RWPE1 (cell line): ENCODE measurements at regions of chr10 and their contacts with region 1.

Region 1: GRCh38 chr10:68110027-68110426 is 739 bp downstream of the MYPN start:
- DNase-seq: no peak
- H3K27ac ChIP-seq: no peak overlapping the region
- CTCF ChIP-seq: no peak

Region 2: GRCh38 chr10:67539312-67539711 is 570.7 kb before region 1 on chr10:
- CTCF ChIA-PET with region 1: no interaction called
- POLR2A ChIA-PET with region 1: interaction called, 10 read pairs
- DNase-seq: no peak
- H3K27ac ChIP-seq: no peak overlapping the region
- CTCF ChIP-seq: no peak

Region 3: GRCh38 chr10:67936416-67936815 is 173.6 kb before region 1 on chr10:
- CTCF ChIA-PET with region 1: no interaction called
- POLR2A ChIA-PET with region 1: no interaction called
- DNase-seq: no peak
- H3K27ac ChIP-seq: no peak overlapping the region
- CTCF ChIP-seq: no peak

Region 4: GRCh38 chr10:68192113-68192512 is 82.1 kb after region 1 on chr10:
- CTCF ChIA-PET with region 1: no interaction called
- POLR2A ChIA-PET with region 1: no interaction called
- DNase-seq: peak; percentile 44
- H3K27ac ChIP-seq: no peak overlapping the region
- CTCF ChIP-seq: no peak